Uterus (tissue), 4 donors: ENCODE measurements at regions of chr2 and their contacts with region 1.

Region 1: GRCh38 chr2:45494269-45494977 is 116.6 kb downstream of the SRBD1 start:
- DNase-seq: no peak
- H3K4me3 ChIP-seq: no peak overlapping the region
- H3K27ac ChIP-seq: no peak overlapping the region
- H3K4me1 ChIP-seq: no peaks in the 10 kb centered on the region
- H3K27me3 ChIP-seq: no peaks in the 10 kb centered on the region
- CTCF ChIP-seq: peak; percentile 70 to 81 (median 80)
- POLR2A ChIP-seq: no peak

Region 2: GRCh38 chr2:44981136-44982108 is 513.0 kb before region 1 on chr2:
- intact Hi-C with region 1: loop called (anchors 5 kb)
- DNase-seq: peak; percentile 69 to 75
- H3K4me3 ChIP-seq: no peak overlapping the region
- H3K27ac ChIP-seq: no peak overlapping the region
- H3K4me1 ChIP-seq: no peaks in the 10 kb centered on the region
- H3K27me3 ChIP-seq: no peaks in the 10 kb centered on the region
- CTCF ChIP-seq: peak; percentile 77 to 87 (median 78)
- POLR2A ChIP-seq: no peak